ENCODE measurements at regions of chrX and their contacts with region 1.

Region 1: DNA sequence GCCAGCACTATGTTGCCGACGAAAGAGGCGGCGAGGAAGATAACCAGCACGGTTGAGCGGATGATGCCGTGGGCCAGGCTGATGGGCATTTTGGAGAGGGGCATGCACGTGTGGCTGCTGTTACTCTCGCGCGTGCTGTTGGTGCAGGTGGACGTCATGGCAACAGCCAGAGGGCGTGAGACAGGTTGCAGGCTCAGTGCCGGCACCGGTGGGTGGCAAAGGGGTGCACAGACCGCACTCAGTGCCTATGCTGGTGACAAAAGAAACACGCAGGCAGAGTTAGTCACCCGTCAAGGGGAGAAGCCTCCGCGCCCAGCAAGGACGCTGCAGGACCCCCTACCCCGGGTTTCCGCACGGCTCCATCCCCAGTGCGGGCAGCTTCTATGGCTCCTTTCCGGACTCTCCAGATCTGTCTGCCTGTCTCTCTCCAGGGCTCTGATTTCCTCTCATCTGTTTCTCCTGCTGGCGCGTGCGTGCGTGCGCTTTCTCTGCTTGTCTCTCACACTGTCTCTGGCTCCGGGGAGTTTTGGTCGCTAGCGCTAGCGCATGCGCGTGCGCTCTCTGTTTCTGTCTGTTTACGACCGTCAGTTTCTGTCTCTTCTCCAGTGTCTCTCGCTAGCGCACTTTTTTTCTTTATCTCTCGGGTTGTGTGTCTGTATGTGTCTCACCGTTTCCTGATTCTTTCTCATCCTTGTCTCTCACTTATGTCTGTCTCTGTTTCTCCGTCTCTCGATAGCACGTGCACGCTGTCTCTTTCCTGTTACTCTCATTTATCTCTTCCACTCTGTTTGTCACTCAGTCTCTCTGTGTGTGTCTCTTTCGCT is 2.1 kb downstream of the GPR101 start:
- DNase-seq: peak; percentile 73
- ATAC-seq: peak; percentile 85
- H3K4me3 Mint-ChIP-seq: no peak overlapping the region
- H3K27ac Mint-ChIP-seq: no peak overlapping the region
- H3K4me1 Mint-ChIP-seq: peaks cover 7% of the 10 kb centered on the region
- H3K27me3 Mint-ChIP-seq: peaks cover 39% of the 10 kb centered on the region

Region 2: DNA sequence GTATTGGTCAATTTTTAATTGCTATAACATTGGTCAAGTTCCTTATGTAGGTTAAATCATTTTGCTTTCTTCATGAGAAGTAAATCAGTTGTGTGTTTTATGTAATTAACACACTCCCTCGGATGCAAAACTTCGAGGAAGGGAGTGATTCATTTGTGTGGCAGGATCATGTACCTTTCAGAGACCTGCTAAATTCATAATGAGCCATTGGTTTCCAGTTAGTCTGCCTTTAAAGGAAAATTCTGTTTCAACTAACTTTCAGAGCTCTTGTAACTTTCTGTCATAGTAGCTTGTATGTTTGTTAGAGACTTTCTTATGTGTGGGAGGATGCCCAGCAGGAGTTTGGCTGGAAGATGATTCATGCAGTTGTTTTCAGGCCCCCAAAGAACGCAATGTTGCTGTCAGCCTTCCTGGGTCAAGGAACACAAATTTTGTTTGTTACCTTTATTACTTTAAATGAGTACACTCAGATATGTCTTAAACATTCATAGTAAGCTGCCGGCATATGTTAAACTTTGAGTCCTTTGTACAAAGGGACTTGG is 70.1 kb before region 1 on chrX:
- CTCF ChIA-PET with region 1: no interaction called
- POLR2A ChIA-PET with region 1: no interaction called
- intact Hi-C with region 1: loop called in 1 of 2 experiments (anchors 5 kb)
- DNase-seq: no peak
- ATAC-seq: peak; percentile 33
- H3K4me3 Mint-ChIP-seq: no peak overlapping the region
- H3K27ac Mint-ChIP-seq: no peak overlapping the region
- H3K4me1 Mint-ChIP-seq: peaks cover 11% of the 10 kb centered on the region
- H3K27me3 Mint-ChIP-seq: no peaks in the 10 kb centered on the region

Region 3: DNA sequence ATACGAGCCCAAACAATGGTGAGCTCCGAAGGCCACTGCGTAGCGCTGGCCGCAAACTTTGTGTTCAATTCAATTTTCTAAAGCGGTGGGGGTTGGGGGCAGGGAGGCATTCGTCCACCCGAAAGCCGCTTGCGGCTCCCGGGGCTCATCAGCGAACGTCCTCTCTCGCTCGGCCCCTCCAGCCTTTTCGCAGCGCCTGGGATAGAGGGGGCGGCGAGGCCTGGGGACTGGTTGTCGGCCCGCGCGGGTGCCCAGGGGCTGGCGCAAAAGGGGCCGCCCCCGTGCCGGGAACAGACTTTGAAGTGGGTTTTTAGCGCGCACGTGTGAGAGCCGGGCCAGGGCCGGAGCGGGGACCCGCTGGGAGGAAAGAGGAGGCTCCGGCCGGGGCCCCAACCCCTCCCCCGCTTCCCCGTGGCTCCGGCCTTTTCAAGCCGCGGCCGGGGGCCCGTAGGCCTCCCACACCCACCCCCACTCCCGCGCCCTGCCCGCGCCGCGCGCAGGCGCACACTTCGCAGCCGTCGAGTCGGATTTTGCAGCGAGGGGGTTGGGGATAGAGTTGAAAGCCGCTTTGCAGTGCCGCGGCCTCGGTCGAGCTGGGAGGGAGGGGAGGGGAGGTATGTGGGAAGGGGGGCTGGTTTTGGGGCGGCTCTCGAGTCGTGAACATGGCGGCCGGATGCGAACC is 542.5 kb after region 1 on chrX:
- CTCF ChIA-PET with region 1: no interaction called
- POLR2A ChIA-PET with region 1: no interaction called
- intact Hi-C with region 1: loop called in 1 of 2 experiments (anchors 10 kb)
- DNase-seq: no peak
- ATAC-seq: no peak
- H3K4me3 Mint-ChIP-seq: no peak overlapping the region
- H3K27ac Mint-ChIP-seq: no peak overlapping the region
- H3K4me1 Mint-ChIP-seq: no peaks in the 10 kb centered on the region
- H3K27me3 Mint-ChIP-seq: peaks cover 34% of the 10 kb centered on the region